ENCODE measurements at regions of chr1 and their contacts with region 1.

Region 1: GRCh38 chr1:37682334-37682987 is 9.9 kb upstream of the CDCA8 start:
- DNase-seq: peak; percentile 63 to 87
- ATAC-seq: peak; percentile 77 to 89 (median 77)
- H3K4me3 ChIP-seq: no peak overlapping the region
- H3K4me3 Mint-ChIP-seq: no peak overlapping the region
- H3K27ac ChIP-seq: no peak overlapping the region
- H3K27ac Mint-ChIP-seq: no peak overlapping the region
- H3K4me1 ChIP-seq: no peaks in the 10 kb centered on the region
- H3K4me1 Mint-ChIP-seq: no peaks in the 10 kb centered on the region
- H3K27me3 ChIP-seq: no peaks in the 10 kb centered on the region
- H3K27me3 Mint-ChIP-seq: no peaks in the 10 kb centered on the region
- CTCF ChIP-seq: peak; percentile 95

Region 2: DNA sequence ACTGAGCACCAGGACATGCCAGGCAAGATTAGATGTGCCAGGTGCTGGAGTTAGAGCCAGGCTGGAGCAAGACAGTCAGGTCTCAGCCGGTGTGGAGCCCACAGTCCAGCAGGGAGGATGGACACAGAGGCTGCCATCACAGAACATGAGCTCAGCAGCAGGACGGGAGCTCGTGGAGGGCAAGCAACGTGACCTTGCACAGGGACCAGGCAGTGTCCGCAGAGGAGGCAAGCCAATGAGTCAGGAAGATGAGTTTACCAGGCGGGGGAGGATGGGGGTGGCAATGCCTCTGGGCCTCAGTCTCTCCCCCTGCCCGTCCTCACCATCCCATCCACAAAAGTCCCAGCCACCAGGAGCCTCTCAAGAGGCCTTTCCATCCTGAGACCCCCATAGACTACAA is 228.8 kb before region 1 on chr1:
- intact Hi-C with region 1: loop called (anchors 1 kb)
- DNase-seq: no peak
- ATAC-seq: no peak
- H3K4me3 ChIP-seq: no peak overlapping the region
- H3K4me3 Mint-ChIP-seq: no peak overlapping the region
- H3K27ac ChIP-seq: no peak overlapping the region
- H3K27ac Mint-ChIP-seq: no peak overlapping the region
- H3K4me1 ChIP-seq: peaks cover 19% of the 10 kb centered on the region
- H3K4me1 Mint-ChIP-seq: peaks cover 7 to 17% of the 10 kb centered on the region in 2 donors
- H3K27me3 ChIP-seq: no peaks in the 10 kb centered on the region
- H3K27me3 Mint-ChIP-seq: no peaks in the 10 kb centered on the region
- CTCF ChIP-seq: no peak

Region 3: DNA sequence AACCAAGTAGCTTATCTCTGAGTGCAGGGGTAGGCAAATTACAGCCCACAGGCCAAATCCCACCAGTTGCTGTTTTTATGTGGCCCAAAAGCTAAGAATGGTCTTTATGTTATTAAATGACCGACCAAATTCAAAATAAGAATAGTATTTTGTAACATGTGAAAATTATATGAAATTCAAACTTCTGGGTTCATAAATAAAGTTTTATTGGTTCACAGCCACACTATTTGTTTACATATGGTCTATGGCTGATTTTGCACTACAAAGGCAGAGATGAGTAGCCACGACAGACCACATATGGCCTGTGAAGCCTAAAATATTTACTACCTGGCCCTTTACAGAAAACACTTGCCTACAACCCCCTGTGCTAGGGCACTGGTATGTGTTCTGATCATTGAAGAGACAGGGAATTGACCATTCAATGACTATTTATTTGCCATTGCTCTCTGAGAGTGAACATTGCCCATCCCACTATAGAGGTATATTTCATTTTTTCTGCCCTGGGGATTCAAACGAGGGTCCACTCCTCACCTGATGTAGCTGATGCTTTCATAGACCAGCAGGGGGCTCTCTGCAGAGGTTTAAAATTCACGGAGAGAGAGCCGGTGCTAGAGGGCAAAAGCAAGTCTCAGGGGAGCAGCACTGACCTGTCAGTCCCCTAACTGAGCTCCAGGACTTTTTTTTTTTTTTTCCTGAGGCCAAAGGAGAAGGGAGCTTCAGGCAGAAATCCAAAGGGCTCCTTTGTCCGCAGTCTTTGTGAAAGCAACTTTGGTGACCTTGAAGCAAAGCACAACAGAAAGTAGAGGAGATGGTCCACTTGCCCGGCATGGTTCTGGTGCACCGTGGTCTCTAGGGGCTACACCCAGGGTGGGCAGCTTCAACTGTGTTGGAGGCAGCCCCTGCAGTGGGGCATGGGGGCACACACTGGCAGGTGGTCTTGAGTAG is 79.4 kb before region 1 on chr1:
- intact Hi-C with region 1: loop called (anchors 1 kb)
- DNase-seq: peak in 1 of 2 donors; percentile 71
- ATAC-seq: peak; percentile 58 to 75 (median 67)
- H3K4me3 ChIP-seq: no peak overlapping the region
- H3K4me3 Mint-ChIP-seq: no peak overlapping the region
- H3K27ac ChIP-seq: no peak overlapping the region
- H3K27ac Mint-ChIP-seq: no peak overlapping the region
- H3K4me1 ChIP-seq: peaks cover 3% of the 10 kb centered on the region
- H3K4me1 Mint-ChIP-seq: peaks cover 5% of the 10 kb centered on the region in 2 donors
- H3K27me3 ChIP-seq: no peaks in the 10 kb centered on the region
- H3K27me3 Mint-ChIP-seq: peaks cover 0 to 11% of the 10 kb centered on the region in 2 donors
- CTCF ChIP-seq: peak; percentile 61